ENCODE measurements at regions of chr7 and their contacts with region 1.

Region 1: DNA sequence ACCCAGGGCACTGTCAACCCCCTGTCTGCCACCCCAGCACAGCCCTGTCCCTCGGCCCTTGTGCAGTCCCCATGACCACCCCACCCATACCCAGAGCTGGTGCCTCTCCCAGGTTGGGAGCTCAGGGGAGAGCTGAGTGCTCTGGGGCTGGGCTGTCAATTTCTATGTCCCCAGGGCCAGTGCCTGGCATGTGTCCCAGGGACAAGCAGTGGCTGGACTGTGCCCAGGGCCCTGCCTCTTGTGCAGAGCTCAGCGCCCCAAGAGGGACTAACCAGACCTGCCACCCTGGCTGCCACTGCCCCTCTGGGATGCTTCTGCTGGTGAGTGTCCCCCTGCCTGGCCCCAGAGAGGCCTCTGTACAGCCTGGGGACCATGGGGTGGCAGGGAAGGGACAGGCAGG is 29.0 kb upstream of the ZNF862 start:
- DNase-seq: no peak
- H3K4me3 Mint-ChIP-seq: no peak overlapping the region
- H3K27ac Mint-ChIP-seq: no peak overlapping the region
- H3K4me1 Mint-ChIP-seq: no peaks in the 10 kb centered on the region
- H3K27me3 Mint-ChIP-seq: peaks cover 33% of the 10 kb centered on the region
- CTCF ChIP-seq: no peak

Region 2: DNA sequence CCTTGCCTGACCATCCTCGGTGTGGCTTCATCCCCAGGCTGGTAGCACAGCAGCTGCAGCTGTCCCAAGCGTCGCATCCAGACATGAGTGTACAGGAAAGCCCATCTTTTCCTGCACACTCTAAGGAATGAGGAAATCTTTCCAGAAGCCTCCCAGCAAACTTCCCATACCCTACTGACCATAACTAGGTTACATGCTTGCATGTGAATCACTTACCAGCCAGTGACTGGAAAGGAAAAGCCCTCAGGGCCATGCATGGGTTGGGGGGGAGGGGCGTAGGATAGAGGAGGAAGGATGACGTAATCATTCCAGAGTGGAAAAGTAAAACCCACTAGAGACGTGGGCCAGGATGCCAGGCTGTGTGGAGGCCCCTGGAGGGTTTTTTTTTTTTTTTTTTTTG is 588.7 kb before region 1 on chr7:
- CTCF ChIA-PET with region 1: no interaction called
- POLR2A ChIA-PET with region 1: no interaction called
- intact Hi-C with region 1: no loop called
- DNase-seq: peak; percentile 42
- H3K4me3 Mint-ChIP-seq: no peak overlapping the region
- H3K27ac Mint-ChIP-seq: no peak overlapping the region
- H3K4me1 Mint-ChIP-seq: peaks cover 18% of the 10 kb centered on the region
- H3K27me3 Mint-ChIP-seq: no peaks in the 10 kb centered on the region
- CTCF ChIP-seq: no peak

Region 3: DNA sequence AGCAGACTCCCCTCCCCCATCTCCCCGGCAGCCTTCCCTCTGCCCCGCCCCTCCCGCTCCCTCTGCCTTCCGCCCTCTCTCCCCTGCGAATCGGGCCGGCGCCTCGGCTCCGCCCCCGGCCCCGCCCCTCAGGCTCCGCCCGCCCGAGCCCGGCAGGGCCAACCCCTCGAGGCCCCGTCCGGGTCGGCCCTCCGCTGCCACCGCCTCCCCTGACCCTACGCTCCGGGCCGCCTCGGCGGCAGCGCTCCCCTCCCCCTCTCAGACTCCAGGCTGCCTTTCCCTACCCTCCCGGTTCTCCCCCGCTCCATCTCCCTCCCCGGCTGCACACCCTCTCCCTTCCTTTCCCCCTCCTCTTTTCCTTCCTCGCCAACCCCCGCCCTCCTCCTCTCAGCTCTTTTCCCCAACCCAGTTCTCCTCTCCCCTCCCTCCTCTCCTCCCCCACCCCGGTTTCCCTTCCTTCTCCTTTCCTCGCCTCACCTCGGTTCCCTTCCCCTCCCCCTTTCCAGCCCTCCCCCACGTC is 37.4 kb before region 1 on chr7:
- CTCF ChIA-PET with region 1: interaction called, 10 read pairs
- POLR2A ChIA-PET with region 1: no interaction called
- intact Hi-C with region 1: no loop called
- DNase-seq: peak; percentile 87
- H3K4me3 Mint-ChIP-seq: peak overlapping the region; percentile 82
- H3K27ac Mint-ChIP-seq: no peak overlapping the region
- H3K4me1 Mint-ChIP-seq: no peaks in the 10 kb centered on the region
- H3K27me3 Mint-ChIP-seq: no peaks in the 10 kb centered on the region
- CTCF ChIP-seq: no peak

Region 4: GRCh38 chr7:149783386-149784250 is 25.6 kb before region 1 on chr7:
- CTCF ChIA-PET with region 1: interaction called, 10 read pairs
- POLR2A ChIA-PET with region 1: no interaction called
- intact Hi-C with region 1: no loop called
- DNase-seq: no peak
- H3K4me3 Mint-ChIP-seq: no peak overlapping the region
- H3K27ac Mint-ChIP-seq: no peak overlapping the region
- H3K4me1 Mint-ChIP-seq: no peaks in the 10 kb centered on the region
- H3K27me3 Mint-ChIP-seq: no peaks in the 10 kb centered on the region
- CTCF ChIP-seq: no peak

Region 5: DNA sequence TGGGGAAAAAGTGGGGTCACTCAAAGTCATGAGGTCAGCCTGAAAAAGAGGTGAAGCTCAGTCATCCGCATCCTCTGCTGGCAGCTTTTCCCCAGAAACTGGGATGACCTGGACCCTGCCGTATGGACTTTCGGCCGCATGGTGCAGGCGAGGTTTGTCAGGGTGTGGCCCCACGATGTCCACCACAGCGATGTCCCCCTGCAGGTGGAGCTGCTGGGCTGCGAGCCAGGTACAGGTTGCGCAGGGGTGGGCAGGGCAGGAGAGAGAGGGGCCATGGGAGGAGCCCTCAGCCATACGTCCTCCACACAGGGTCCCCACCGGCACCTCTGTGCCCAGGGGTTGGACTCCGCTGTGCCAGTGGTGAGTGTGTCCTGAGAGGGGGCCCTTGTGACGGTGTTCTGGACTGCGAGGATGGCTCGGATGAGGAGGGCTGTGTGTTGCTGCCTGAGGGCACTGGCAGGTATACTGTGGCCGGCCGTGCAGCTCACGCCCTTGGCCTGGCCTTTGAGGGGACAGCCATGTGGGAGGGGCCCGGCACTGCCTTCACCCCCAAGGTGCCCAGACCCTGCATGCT is 12.8 kb before region 1 on chr7:
- CTCF ChIA-PET with region 1: interaction called, 15 read pairs
- POLR2A ChIA-PET with region 1: no interaction called
- intact Hi-C with region 1: no loop called
- DNase-seq: no peak
- H3K4me3 Mint-ChIP-seq: no peak overlapping the region
- H3K27ac Mint-ChIP-seq: no peak overlapping the region
- H3K4me1 Mint-ChIP-seq: peaks cover 10% of the 10 kb centered on the region
- H3K27me3 Mint-ChIP-seq: peaks cover 13% of the 10 kb centered on the region
- CTCF ChIP-seq: no peak

Region 6: GRCh38 chr7:149821447-149822191 is 12.4 kb after region 1 on chr7:
- CTCF ChIA-PET with region 1: interaction called, 12 read pairs
- POLR2A ChIA-PET with region 1: no interaction called
- intact Hi-C with region 1: no loop called
- DNase-seq: no peak
- H3K4me3 Mint-ChIP-seq: no peak overlapping the region
- H3K27ac Mint-ChIP-seq: peak overlapping the region; percentile 8
- H3K4me1 Mint-ChIP-seq: no peaks in the 10 kb centered on the region
- H3K27me3 Mint-ChIP-seq: no peaks in the 10 kb centered on the region
- CTCF ChIP-seq: no peak

Region 7: DNA sequence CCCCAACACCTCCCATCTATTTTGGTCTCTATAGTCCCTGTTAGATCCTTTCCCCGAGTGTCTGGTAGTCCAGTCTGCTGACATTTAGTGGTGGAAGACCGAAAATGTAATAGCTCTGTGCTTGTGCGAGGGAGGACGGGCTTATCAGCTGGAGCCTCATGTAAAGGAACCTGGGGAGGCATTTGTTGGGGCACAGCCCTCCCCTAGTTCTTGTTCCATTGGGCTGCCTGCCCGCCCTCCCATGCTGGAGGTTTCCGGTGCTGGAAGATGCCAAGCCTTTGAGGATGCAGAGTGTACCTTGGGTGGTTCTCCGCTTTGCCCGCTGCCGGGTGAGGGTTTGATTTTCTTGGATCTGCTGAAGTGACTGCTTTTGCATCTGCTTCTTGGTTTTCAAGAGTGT is 34.4 kb after region 1 on chr7:
- CTCF ChIA-PET with region 1: no interaction called
- POLR2A ChIA-PET with region 1: no interaction called
- intact Hi-C with region 1: no loop called
- DNase-seq: no peak
- H3K4me3 Mint-ChIP-seq: no peak overlapping the region
- H3K27ac Mint-ChIP-seq: no peak overlapping the region
- H3K4me1 Mint-ChIP-seq: peaks cover 15% of the 10 kb centered on the region
- H3K27me3 Mint-ChIP-seq: no peaks in the 10 kb centered on the region
- CTCF ChIP-seq: no peak

Region 8: GRCh38 chr7:149873074-149873969 is 64.1 kb after region 1 on chr7 and contains the start of gene ATP6V0E2:
- CTCF ChIA-PET with region 1: interaction called, 19 read pairs
- POLR2A ChIA-PET with region 1: no interaction called
- intact Hi-C with region 1: no loop called
- DNase-seq: peak; percentile 92
- H3K4me3 Mint-ChIP-seq: peak within 1 kb of the TSS; percentile 79
- H3K27ac Mint-ChIP-seq: peak within 1 kb of the TSS; percentile 22
- H3K4me1 Mint-ChIP-seq: peaks cover 6% of the 10 kb centered on the region
- H3K27me3 Mint-ChIP-seq: no peaks in the 10 kb centered on the region
- CTCF ChIP-seq: no peak
- total RNA-seq, gene ATP6V0E2: 8.6 and 8.9 TPM in 2 replicates